Activated CD4-positive, alpha-beta T cell treated with anti-CD3 and anti-CD28 coated beads, Interleukin-2, amount 10 ng/mL, durations not matched to agents 24 days and 14 days (primary cell): ENCODE measurements at regions of chr4 and their contacts with region 1.

Region 1: DNA sequence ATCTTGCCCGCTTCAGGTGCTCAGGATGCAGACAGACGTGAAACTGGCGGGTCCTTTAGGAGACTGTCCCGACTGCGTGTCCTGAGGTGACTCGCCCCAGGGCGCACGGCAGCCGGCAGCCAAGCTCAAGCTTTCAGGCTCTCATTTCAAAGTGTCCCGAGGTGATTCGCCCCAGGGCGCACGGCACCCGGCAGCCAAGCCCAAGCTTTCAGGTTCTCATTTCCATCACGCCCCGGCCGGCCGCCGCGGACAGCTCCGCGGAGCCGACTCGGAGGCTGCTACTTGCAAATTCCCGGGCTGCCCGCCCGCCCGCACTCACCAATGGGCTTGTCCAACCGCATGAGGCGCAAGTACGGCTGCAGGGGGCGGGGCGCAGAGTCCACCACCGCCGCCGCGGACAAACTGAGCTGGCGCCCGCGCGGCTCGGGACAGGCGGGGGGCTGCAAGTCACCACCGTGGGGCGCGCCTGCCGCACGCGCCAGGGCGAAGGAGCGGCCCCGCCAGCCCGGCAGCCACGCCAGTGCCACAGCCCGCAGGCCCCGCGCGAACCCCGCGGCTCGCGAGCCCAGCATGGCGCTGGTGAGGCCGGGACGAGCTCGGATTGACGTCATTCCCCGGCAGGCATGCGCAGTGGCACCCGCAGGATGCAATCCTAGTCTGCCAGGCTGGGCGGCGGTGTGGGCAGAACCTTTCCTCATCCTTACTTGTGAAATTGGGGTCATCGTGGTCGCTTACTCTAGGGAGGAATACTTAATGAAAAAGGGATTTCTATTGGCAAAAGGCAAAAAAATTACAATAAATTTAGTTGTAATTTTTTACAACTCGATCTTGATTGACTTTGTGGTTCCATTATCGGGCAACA is at the start of gene COQ2:
- DNase-seq: peak; percentile 98
- H3K4me3 Mint-ChIP-seq: peak within 1 kb of the TSS; percentile 93
- H3K27ac Mint-ChIP-seq: peak within 1 kb of the TSS; percentile 96
- H3K4me1 Mint-ChIP-seq: peaks cover 31% of the 10 kb centered on the region
- H3K27me3 Mint-ChIP-seq: no peaks in the 10 kb centered on the region
- total RNA-seq, gene COQ2: 20.5 and 20.7 TPM in 2 replicates

Region 2: GRCh38 chr4:82851885-82852750 is 432.3 kb before region 1 on chr4:
- intact Hi-C with region 1: loop called (anchors 5 kb)
- DNase-seq: peak; percentile 79
- H3K4me3 Mint-ChIP-seq: no peak overlapping the region
- H3K27ac Mint-ChIP-seq: peak overlapping the region; percentile 9
- H3K4me1 Mint-ChIP-seq: peaks cover 7% of the 10 kb centered on the region
- H3K27me3 Mint-ChIP-seq: no peaks in the 10 kb centered on the region

Region 3: DNA sequence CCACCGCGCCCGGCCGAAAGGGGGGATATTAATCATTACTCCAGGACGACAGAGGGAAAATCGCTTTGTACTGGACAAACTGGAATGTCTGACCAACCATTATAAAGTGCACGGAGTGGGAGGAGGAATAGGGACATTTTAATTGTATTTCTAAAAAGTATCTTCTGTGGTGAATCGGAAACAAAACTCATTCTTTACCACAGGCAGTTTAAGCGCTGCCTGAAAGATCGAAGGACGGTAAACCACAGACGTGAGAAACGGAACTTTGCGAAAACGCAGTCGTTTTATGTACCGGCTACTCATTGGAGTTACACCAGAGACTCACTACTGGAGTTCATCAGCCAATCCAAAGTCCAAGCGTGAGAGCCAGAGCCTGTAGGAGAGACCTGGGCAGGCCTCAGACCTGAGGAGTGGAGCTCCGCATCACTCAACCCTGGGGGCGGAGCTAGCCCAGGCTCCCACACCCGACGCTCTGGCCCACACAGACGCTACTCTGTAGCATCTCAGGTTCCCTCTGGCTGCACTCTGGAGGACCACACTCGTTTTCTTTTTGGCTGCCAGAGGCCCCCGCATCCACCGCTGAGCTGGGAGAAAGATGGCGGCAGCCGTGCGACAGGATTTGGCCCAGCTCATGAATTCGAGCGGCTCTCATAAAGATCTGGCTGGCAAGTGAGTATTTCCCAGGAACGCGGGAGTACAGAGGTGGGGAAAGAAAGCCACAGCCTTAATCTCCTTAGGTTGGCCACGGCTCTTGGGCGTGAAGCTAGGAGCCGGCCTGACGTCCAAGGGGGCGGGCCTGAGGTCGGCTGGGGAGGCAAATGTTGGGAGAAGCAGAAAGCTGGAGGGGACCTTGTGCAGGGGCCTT is 249.6 kb before region 1 on chr4 and contains the start of gene COPS4:
- intact Hi-C with region 1: loop called (anchors 1 kb)
- DNase-seq: peak; percentile 98
- H3K4me3 Mint-ChIP-seq: peak within 1 kb of the TSS; percentile 90
- H3K27ac Mint-ChIP-seq: peak within 1 kb of the TSS; percentile 98
- H3K4me1 Mint-ChIP-seq: peaks cover 16% of the 10 kb centered on the region
- H3K27me3 Mint-ChIP-seq: peaks cover 6% of the 10 kb centered on the region
- total RNA-seq, gene COPS4: 36.5 and 37.5 TPM in 2 replicates

Region 4: GRCh38 chr4:83267121-83267829 is 17.1 kb before region 1 on chr4:
- intact Hi-C with region 1: loop called (anchors 2 kb)
- DNase-seq: no peak
- H3K4me3 Mint-ChIP-seq: no peak overlapping the region
- H3K27ac Mint-ChIP-seq: no peak overlapping the region
- H3K4me1 Mint-ChIP-seq: peaks cover 12% of the 10 kb centered on the region
- H3K27me3 Mint-ChIP-seq: no peaks in the 10 kb centered on the region

Region 5: GRCh38 chr4:83356899-83357661 is 72.7 kb after region 1 on chr4:
- intact Hi-C with region 1: loop called (anchors 1 kb)
- DNase-seq: no peak
- H3K4me3 Mint-ChIP-seq: peak overlapping the region; percentile 22
- H3K27ac Mint-ChIP-seq: peak overlapping the region; percentile 96
- H3K4me1 Mint-ChIP-seq: peaks cover 15% of the 10 kb centered on the region
- H3K27me3 Mint-ChIP-seq: no peaks in the 10 kb centered on the region

Region 6: DNA sequence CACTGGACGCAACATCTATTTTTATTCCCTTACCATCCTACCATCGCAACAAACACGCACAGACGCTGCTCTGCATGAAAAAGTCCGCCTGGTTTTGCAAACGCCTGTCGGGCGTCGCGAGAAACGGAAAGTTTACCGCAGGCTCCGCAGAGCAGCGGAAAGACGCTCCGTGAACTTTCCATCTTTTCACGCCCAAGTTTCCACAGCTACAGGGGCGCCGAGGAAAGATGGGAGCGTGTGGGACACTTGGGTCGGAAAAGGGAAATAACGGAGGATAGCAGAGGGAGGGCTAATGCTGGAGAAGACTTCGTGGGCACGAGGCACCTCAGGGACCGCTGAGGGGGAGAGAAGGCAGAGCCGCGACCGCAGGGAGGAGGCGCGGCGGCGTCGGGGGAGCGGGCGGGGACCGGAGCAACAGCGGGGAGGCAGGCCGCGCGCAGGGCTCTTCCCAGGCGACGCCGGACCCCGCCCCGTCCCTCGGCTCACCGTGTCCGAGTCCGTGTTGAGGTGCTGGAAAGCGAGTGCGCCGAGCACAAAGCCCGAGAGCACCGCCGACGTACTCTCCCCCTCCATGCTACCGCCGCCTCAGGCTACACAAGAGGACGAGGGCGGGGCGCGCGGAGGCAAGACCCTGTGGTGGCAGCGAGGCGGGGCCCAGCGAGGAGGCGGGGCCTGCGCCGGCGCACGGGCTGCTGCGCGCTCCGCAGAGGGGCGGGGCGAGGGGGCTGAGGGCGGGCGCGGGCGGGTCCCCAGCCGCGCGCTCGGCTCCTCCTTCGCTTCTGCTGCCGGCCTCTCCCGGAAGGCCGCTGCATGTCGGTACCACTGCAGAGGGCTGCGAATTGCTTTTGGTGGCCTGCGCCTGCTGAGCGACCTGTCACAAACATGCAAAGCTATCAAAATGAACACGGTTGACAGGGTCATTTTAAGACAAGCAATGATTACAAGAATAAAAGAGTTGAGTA is 200.4 kb after region 1 on chr4 and contains the start of gene ABRAXAS1:
- intact Hi-C with region 1: loop called (anchors 2 kb)
- DNase-seq: peak; percentile 98
- H3K4me3 Mint-ChIP-seq: peak within 1 kb of the TSS; percentile 96
- H3K27ac Mint-ChIP-seq: peak within 1 kb of the TSS; percentile 95
- H3K4me1 Mint-ChIP-seq: peaks cover 7% of the 10 kb centered on the region
- H3K27me3 Mint-ChIP-seq: no peaks in the 10 kb centered on the region
- total RNA-seq, gene ABRAXAS1: 10.4 and 12.0 TPM in 2 replicates